ENCODE measurements at regions of chr5 and their contacts with region 1.

Region 1: DNA sequence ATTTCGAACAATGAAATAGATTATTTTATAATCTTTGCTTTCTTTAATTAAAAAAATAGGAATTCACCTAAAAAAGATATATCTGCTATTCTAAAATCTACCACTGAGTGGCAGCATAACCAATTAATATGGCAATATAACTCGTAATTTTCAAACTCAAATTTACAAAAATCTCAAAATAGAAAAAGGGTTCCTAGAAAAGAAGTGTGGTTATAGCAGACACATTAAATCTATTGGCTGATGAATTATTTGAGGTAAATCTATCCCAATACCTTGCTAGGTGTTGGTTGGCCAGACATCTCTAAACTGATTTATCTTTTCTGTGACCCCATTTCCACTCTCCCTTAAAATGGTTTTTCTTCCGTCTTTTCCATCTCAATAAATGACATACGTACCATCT is 30.2 kb upstream of the NRG2 start:
- DNase-seq: no peak
- ATAC-seq: no peak
- H3K4me3 ChIP-seq: no peak overlapping the region
- H3K27ac ChIP-seq: no peak overlapping the region
- H3K4me1 ChIP-seq: no peaks in the 10 kb centered on the region
- H3K27me3 ChIP-seq: no peaks in the 10 kb centered on the region; the same call in 1 of the 2 replicates
- CTCF ChIP-seq: peak; percentile 59; the same call in 1 of the 2 replicates

Region 2: GRCh38 chr5:140145818-140146522 is 72.7 kb after region 1 on chr5:
- CTCF ChIA-PET with region 1: interaction called, 7 read pairs
- POLR2A ChIA-PET with region 1: no interaction called
- in situ Hi-C with region 1: no loop called
- intact Hi-C with region 1: loop called (anchors 1 kb)
- DNase-seq: no peak
- ATAC-seq: peak; percentile 78
- H3K4me3 ChIP-seq: peak overlapping the region; percentile 6 to 8; a peak in 2 of 4 replicates
- H3K27ac ChIP-seq: no peak overlapping the region
- H3K4me1 ChIP-seq: peaks cover 5% of the 10 kb centered on the region; the same call in 1 of the 2 replicates
- H3K27me3 ChIP-seq: no peaks in the 10 kb centered on the region
- CTCF ChIP-seq: peak; percentile 80; the same call in 1 of the 2 replicates

Region 3: DNA sequence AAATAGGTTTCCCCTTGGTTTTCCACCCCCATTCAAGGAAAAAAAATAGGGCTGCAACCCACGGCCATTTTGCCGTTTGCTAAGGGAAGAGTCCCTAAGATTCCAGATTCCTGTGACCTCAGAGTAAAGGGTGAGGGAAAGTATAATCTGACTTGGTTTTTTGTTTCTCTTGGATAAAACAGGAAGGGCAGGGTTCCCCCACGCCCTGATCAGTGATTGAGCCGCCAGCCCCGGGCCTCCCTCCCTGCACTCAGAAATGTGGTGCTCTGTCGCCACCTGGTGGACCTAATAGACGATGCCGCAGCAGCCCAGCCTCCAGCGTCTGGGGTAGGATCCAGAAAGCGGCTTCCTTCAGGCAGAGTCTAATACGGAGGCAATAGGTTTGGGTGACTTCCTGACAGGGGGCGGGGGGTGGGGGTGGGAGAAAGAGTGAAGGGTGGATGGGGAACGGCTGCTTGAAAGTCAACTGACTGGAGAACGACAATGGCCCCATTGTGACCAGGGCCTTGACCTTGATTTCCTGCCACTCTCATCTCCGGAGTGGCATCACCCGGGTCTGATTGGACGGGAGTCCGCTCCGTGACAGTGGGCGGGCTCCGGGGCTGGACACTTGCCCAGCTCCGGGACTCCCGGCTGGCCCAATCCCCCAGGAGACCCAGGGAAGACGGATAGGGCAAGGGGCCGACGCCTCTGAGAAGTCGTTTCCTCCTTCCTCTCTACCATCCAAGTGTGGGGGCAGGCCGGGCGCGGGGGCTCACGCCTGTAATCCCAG is 83.9 kb after region 1 on chr5:
- CTCF ChIA-PET with region 1: interaction called, 6 read pairs
- POLR2A ChIA-PET with region 1: no interaction called
- in situ Hi-C with region 1: no loop called
- intact Hi-C with region 1: loop called (anchors 1 kb)
- DNase-seq: peak; percentile 57
- ATAC-seq: peak; percentile 98
- H3K4me3 ChIP-seq: peak overlapping the region; percentile 16 to 42
- H3K27ac ChIP-seq: peak overlapping the region; percentile 74
- H3K4me1 ChIP-seq: peaks cover 6% of the 10 kb centered on the region
- H3K27me3 ChIP-seq: no peaks in the 10 kb centered on the region
- CTCF ChIP-seq: peak; percentile 93